ENCODE measurements at regions of chr16 and their contacts with region 1.

Region 1: GRCh38 chr16:15404792-15405191 is 9.2 kb downstream of the MPV17L start:
- DNase-seq: peak; percentile 65
- H3K4me3 ChIP-seq: no peak overlapping the region
- H3K27ac ChIP-seq: no peak overlapping the region
- H3K4me1 ChIP-seq: no peaks in the 10 kb centered on the region
- H3K27me3 ChIP-seq: no peaks in the 10 kb centered on the region
- CTCF ChIP-seq: no peak

Region 2: GRCh38 chr16:15041271-15042004 is 363.4 kb before region 1 on chr16:
- intact Hi-C with region 1: no loop called
- DNase-seq: peak; percentile 87 to 92
- H3K4me3 ChIP-seq: no peak overlapping the region
- H3K27ac ChIP-seq: peak overlapping the region; percentile 47 to 56
- H3K4me1 ChIP-seq: peaks cover 0 to 13% (median 6%) of the 10 kb centered on the region in 4 donors
- H3K27me3 ChIP-seq: no peaks in the 10 kb centered on the region
- CTCF ChIP-seq: peak; percentile 29 to 32

Region 3: DNA sequence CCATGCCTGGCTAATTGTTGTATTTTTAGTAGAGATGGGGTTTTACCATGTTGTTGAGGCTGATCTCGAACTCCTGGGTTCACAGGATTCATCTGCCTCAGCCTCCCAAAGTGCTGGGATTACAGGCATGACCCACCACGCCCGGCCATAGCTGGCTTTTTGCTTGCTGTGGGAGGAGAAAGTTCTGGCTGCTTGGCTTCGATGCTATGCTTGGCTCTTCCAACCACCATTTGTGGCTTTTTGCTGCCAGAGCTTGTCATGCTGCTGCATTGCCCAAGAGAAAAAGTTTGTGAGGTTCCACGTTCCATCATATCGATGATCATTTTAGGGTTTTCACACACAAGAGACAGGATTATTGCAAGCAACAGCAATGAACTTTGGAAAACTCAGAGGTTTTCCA is 45.8 kb after region 1 on chr16:
- intact Hi-C with region 1: loop called (anchors 5 kb)
- DNase-seq: peak; percentile 53 to 72
- H3K4me3 ChIP-seq: no peak overlapping the region
- H3K27ac ChIP-seq: peak overlapping the region in 1 of 2 donors; percentile 16
- H3K4me1 ChIP-seq: peaks cover 0 to 9% (median 2%) of the 10 kb centered on the region in 4 donors
- H3K27me3 ChIP-seq: no peaks in the 10 kb centered on the region
- CTCF ChIP-seq: no peak

Region 4: DNA sequence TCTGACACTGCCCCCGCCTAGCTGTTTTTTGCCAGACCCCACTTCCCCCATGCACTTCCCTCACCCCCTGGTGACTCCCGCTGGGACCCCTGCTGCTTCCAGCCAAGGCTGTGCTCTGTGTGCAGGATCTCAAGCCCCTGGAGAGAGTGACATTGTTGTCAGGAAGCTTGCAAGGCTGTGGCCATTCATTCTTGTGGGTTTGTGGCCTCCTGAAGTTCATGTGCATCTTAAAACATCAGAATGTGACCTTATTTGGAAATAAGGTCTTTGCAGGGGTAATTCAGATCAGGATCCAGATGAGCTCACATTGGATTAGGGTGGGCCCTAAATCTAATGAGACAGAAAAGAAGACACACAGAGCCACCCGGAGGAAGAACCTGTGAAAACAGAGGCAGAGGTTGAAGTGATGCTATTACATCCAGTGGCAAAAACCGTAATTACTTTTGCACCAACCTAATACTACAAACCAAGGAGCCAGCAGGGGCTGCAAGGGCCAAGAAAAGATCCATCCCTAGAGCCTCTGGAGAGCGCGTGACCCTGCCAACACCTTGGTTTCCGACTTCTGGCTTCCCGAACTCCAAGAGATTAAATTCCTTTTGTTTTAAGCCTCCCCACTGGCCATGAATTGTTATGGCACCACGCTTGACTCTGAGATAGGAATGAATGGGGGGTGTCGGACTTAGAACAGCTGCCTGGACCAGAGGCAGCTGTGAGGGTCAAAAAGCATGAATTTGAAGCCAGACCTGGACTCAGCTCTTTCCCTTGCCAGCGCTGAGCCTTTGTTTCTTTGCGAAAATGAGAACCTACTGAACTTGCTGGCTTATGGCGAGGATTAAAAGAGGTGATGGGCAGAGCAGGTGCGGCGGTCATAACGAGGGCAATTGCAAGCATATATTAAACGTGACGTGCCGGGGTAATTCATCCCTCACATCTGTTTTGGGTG is 105.1 kb after region 1 on chr16:
- intact Hi-C with region 1: no loop called
- DNase-seq: no peak
- H3K4me3 ChIP-seq: no peak overlapping the region
- H3K27ac ChIP-seq: no peak overlapping the region
- H3K4me1 ChIP-seq: peaks cover 0 to 20% (median 12%) of the 10 kb centered on the region in 4 donors
- H3K27me3 ChIP-seq: no peaks in the 10 kb centered on the region
- CTCF ChIP-seq: no peak